HEK293T (cell line): ENCODE measurements at regions of chr6 and their contacts with region 1.

Region 1: GRCh38 chr6:147438758-147439528 is 69.5 kb upstream of the SAMD5 start:
- DNase-seq: no peak

Region 2: GRCh38 chr6:146047371-146047770 is 1391.6 kb before region 1 on chr6:
- CTCF ChIA-PET with region 1: interaction called, 10 read pairs
- POLR2A ChIA-PET with region 1: no interaction called
- DNase-seq: no peak

Region 3: DNA sequence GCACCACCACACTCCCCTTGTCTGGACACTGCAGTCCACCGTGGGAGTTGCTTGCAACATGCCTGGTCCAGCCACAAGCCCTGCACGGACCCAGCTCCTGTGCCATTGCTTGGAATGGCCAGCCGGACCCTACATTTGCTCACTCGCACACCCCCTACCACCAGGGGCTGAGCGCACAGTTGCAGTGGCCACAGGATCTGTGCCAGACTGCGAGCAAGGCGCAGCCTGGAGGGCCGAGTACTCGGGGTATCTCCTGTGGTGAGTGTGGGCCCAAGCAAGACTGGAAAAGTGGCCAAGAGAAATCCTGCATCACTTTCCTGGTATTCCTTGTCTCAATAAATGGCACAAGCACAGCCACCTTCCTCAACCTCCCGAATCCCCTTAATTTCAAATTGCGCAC is 15.8 kb before region 1 on chr6:
- CTCF ChIA-PET with region 1: no interaction called
- POLR2A ChIA-PET with region 1: no interaction called
- DNase-seq: no peak